Adrenal gland (tissue), 19 donors: ENCODE measurements at regions of chr9 and their contacts with region 1.

Region 1: DNA sequence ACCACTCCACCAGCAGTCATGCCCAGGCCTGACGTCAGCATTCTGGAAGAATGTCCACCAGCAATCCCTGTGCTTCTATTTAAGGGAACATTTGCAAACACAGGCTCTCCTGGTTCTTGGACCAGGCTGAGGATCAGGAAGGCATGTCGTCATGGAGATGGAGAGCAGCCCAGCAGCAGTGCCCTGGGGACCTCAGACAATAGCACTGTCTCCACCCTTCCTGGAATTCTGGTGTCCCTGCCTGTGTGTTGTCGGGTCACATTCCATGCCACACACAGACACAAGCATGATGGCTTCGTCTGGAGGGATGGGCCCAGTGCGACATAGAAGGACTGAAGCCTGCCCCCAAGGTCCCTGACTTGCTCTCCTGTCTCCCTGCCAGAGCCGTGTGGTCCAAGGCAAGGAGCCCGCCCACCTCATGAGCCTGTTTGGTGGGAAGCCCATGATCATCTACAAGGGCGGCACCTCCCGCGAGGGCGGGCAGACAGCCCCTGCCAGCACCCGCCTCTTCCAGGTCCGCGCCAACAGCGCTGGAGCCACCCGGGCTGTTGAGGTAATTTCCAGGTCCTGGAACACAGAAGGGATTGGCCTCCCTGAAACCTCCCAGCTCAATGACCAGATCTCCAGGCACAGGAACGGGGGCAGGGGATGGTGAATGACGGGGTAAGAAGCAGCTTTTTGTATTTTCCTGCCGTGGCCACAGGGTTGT is 43.8 kb downstream of the STOM start:
- DNase-seq: peak; percentile 53 to 91 (median 59)
- H3K4me3 ChIP-seq: no peak overlapping the region
- H3K27ac ChIP-seq: peak overlapping the region in 4 of 5 donors; percentile 28 to 89 (median 62)
- H3K4me1 ChIP-seq: no peaks in the 10 kb centered on the region
- H3K27me3 ChIP-seq: no peaks in the 10 kb centered on the region
- CTCF ChIP-seq: no peak
- POLR2A ChIP-seq: no peak

Region 2: GRCh38 chr9:121369595-121370265 is 43.4 kb after region 1 on chr9 and contains the start of gene STOM:
- intact Hi-C with region 1: loop called (anchors 5 kb)
- DNase-seq: peak; percentile 90 to 95 (median 93)
- H3K4me3 ChIP-seq: peak within 1 kb of the TSS; percentile 51 to 68 (median 60)
- H3K27ac ChIP-seq: peak within 1 kb of the TSS; percentile 87 to 98 (median 90)
- H3K4me1 ChIP-seq: peaks cover 34 to 68% of the 10 kb centered on the region in 2 donors
- H3K27me3 ChIP-seq: no peaks in the 10 kb centered on the region
- CTCF ChIP-seq: peak in 1 of 6 experiments; percentile 5
- POLR2A ChIP-seq: peak; percentile 97 to 98
- total RNA-seq, gene STOM: 104 to 427 (median 218) TPM

Region 3: GRCh38 chr9:121399883-121400607 is 73.8 kb after region 1 on chr9:
- intact Hi-C with region 1: loop called in 1 of 2 experiments (anchors 1 kb)
- DNase-seq: no peak
- H3K4me3 ChIP-seq: no peak overlapping the region
- H3K27ac ChIP-seq: no peak overlapping the region
- H3K4me1 ChIP-seq: no peaks in the 10 kb centered on the region
- H3K27me3 ChIP-seq: no peaks in the 10 kb centered on the region
- CTCF ChIP-seq: peak; percentile 64 to 87 (median 80)
- POLR2A ChIP-seq: no peak